Breast epithelium (tissue), 4 donors: ENCODE measurements at regions of chr18 and their contacts with region 1.

Region 1: DNA sequence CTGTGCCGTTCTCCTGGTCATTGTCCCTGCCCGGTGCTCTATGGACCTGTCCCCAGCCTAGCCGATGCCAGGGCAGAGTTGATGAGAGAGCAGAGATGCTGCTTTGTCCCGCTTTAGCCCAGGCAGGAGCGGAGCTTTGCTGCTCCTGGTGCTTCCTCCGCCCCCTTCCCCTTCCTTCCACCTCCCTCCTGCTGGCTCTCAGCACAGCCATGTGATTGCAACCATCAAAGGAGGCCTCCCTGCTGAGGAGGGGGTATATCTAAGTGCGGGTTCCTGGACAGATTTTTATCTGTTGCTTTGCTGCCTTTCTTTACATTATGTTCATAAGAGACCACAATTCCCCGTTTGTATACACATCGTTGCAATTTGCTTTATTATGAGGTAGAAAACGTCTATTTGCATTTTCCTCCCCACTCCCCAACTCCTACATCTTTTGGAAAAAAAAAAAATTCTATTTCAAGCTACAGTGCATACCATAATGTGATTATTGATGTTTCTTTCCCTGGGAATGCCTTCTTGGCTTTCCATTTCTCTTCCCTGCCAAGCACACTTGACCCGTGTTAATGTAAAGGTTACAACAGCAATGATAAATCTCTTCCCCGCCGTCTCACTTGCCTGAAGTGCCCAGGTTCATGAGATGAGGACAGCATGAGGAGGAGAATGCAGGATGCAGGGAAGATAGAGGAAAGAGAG is 25.4 kb downstream of the ALPK2 start:
- DNase-seq: no peak
- H3K4me3 ChIP-seq: no peak overlapping the region
- H3K27ac ChIP-seq: no peak overlapping the region
- H3K4me1 ChIP-seq: no peaks in the 10 kb centered on the region
- H3K27me3 ChIP-seq: no peaks in the 10 kb centered on the region
- CTCF ChIP-seq: no peak
- POLR2A ChIP-seq: no peak

Region 2: DNA sequence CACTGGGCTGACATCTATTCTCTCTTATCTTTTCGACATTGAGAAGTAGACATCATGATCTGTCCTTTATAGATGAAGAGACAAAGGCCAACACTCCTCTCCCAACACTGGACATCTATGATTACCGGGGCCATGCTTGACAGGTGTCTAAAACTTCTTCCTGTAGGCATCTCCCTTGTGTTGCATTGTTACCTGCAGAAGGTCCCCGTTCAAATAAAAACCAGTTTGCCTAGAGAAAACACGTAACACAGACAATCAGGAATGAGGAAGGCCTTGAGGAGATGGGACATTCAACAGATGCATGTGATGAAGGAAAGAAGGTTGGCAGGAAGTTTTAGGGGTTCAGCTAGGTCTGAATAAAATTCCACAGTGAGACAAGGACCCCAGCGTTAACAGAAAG is 1322.0 kb before region 1 on chr18:
- intact Hi-C with region 1: no loop called
- DNase-seq: no peak
- H3K4me3 ChIP-seq: no peak overlapping the region
- H3K27ac ChIP-seq: no peak overlapping the region
- H3K4me1 ChIP-seq: no peaks in the 10 kb centered on the region
- H3K27me3 ChIP-seq: no peaks in the 10 kb centered on the region
- CTCF ChIP-seq: no peak
- POLR2A ChIP-seq: no peak

Region 3: DNA sequence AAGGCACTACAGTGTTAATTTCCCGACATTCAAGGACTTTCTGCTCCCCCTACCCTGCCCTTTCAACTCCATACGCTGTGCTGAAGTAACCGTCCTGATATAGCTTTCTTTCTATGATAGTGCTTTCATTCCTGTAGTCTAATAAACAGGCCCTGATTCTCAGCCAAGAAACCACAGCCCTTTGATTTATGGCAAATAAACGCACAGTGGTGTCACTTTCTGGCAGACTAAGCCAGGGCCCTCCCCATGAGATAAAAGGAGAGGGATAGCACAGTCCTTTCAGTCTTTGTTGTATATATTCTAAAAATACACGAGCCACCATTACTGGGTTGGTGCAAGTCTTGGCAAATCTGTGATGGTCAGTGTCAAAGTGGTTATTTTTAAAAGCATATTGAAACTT is 265.8 kb before region 1 on chr18:
- intact Hi-C with region 1: no loop called
- DNase-seq: no peak
- H3K4me3 ChIP-seq: no peak overlapping the region
- H3K27ac ChIP-seq: peak overlapping the region in 1 of 2 donors; percentile 43
- H3K4me1 ChIP-seq: no peaks in the 10 kb centered on the region
- H3K27me3 ChIP-seq: no peaks in the 10 kb centered on the region
- CTCF ChIP-seq: no peak
- POLR2A ChIP-seq: no peak

Region 4: DNA sequence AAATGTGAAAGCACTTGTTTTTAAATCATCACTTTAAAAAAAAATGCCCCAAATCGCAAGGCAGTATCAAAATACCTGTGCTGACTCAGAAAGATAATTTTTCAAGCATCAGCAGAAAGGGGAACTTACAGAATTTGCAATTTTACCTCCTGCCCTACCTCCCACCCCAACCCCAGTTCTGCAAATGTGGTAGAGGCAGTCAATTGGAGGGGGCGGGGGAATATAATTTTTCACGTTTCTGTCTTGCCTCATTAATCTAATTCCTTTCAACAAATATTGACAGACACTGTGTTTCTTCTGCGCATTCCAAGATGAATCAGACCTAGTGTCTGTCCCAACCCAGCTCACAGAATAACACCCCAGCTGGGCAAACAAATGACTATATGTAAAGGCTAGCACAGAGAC is 51.5 kb before region 1 on chr18:
- intact Hi-C with region 1: no loop called
- DNase-seq: no peak
- H3K4me3 ChIP-seq: no peak overlapping the region
- H3K27ac ChIP-seq: no peak overlapping the region
- H3K4me1 ChIP-seq: no peaks in the 10 kb centered on the region
- H3K27me3 ChIP-seq: no peaks in the 10 kb centered on the region
- CTCF ChIP-seq: no peak
- POLR2A ChIP-seq: no peak

Region 5: DNA sequence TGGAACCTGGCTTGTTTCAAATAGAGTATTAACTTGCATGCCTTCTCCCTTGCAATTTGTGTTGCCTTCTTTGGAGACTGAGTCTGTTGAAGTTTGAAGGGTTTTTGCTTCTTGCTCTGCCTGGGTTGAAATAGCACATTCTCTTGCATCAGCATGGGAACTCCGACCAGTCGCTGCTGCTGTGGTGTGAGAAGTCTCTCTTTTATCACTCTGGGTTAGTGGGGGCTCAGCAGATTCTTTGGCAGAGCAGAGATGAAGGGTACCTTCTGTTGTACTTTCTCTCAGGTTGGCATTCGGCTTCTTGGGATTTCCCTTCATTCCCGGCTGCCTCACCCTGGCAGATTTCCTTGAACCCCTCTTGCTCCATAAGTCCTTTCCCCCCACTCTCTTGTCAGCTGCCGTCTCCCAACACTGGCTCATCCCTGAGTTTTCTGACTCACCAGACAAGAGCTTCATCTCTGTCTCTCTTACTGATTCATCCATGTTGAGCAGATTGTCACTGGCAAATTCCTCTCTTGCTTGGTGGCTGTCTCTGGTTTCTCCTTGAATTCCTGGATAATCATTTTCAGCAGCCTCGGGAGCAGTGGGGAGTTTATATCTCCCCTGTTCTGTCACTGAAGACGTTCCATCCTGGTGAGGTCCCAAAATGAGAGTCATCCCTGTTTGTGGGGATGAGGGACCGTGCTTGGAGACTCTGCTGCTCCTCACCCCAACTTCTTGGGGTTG is 24.5 kb before region 1 on chr18:
- intact Hi-C with region 1: loop called (anchors 1 kb)
- DNase-seq: no peak
- H3K4me3 ChIP-seq: no peak overlapping the region
- H3K27ac ChIP-seq: no peak overlapping the region
- H3K4me1 ChIP-seq: no peaks in the 10 kb centered on the region
- H3K27me3 ChIP-seq: no peaks in the 10 kb centered on the region
- CTCF ChIP-seq: no peak
- POLR2A ChIP-seq: no peak